Activated B cell treated with CpG ODN at 0.5 μM for 24 hours (primary cell): ENCODE measurements at regions of chr6 and their contacts with region 1.

Region 1: GRCh38 chr6:43059168-43060033 is at the starts of genes KLC4 and MRPL2:
- DNase-seq: peak; percentile 94
- ATAC-seq: peak; percentile 97
- H3K4me3 Mint-ChIP-seq: peak within 1 kb of the TSS; percentile 95
- H3K27ac Mint-ChIP-seq: peak within 1 kb of the TSS; percentile 97
- H3K4me1 Mint-ChIP-seq: peaks cover 38% of the 10 kb centered on the region
- H3K27me3 Mint-ChIP-seq: no peaks in the 10 kb centered on the region
- CTCF ChIP-seq: no peak
- total RNA-seq, gene KLC4: 17.0 and 19.8 TPM in 2 replicates
- total RNA-seq, gene MRPL2: 43.9 and 47.8 TPM in 2 replicates

Region 2: GRCh38 chr6:42984001-42984923 is 75.1 kb before region 1 on chr6 and contains the start of gene PPP2R5D:
- CTCF ChIA-PET with region 1: no interaction called
- POLR2A ChIA-PET with region 1: interaction called, 13 read pairs
- intact Hi-C with region 1: loop called (anchors 2 kb)
- DNase-seq: peak; percentile 88
- ATAC-seq: peak; percentile 95
- H3K4me3 Mint-ChIP-seq: peak within 1 kb of the TSS; percentile 85
- H3K27ac Mint-ChIP-seq: peak within 1 kb of the TSS; percentile 88
- H3K4me1 Mint-ChIP-seq: peaks cover 44% of the 10 kb centered on the region
- H3K27me3 Mint-ChIP-seq: no peaks in the 10 kb centered on the region
- CTCF ChIP-seq: no peak
- total RNA-seq, gene PPP2R5D: 26.7 and 26.8 TPM in 2 replicates

Region 3: DNA sequence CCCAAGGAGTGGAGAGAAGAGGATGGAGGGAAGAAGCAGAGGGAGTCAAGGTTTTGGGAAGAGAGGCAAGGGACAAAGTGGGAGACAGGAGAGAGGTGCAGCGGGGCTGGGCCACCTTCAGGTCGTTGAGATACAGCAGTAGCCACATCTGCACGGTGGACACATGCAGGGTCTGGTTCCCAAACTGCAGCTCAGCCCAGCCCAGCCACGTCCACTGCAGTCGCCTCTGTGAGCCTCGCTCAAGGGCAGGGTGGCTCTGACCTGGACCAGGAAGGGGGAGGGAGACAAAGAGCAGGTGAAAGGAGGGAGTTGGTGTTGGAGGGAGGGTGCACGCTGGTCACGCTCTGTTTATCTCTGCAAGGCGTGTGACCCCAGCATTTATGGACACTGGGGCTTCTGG is 20.7 kb before region 1 on chr6:
- CTCF ChIA-PET with region 1: no interaction called
- POLR2A ChIA-PET with region 1: no interaction called
- intact Hi-C with region 1: no loop called
- DNase-seq: no peak
- ATAC-seq: no peak
- H3K4me3 Mint-ChIP-seq: no peak overlapping the region
- H3K27ac Mint-ChIP-seq: no peak overlapping the region
- H3K4me1 Mint-ChIP-seq: no peaks in the 10 kb centered on the region
- H3K27me3 Mint-ChIP-seq: no peaks in the 10 kb centered on the region
- CTCF ChIP-seq: no peak

Region 4: GRCh38 chr6:43086022-43086658 is 26.7 kb after region 1 on chr6:
- CTCF ChIA-PET with region 1: no interaction called
- POLR2A ChIA-PET with region 1: no interaction called
- intact Hi-C with region 1: loop called (anchors 1 kb)
- DNase-seq: no peak
- ATAC-seq: peak; percentile 95
- H3K4me3 Mint-ChIP-seq: no peak overlapping the region
- H3K27ac Mint-ChIP-seq: no peak overlapping the region
- H3K4me1 Mint-ChIP-seq: peaks cover 6% of the 10 kb centered on the region
- H3K27me3 Mint-ChIP-seq: peaks cover 5% of the 10 kb centered on the region
- CTCF ChIP-seq: no peak

Region 5: DNA sequence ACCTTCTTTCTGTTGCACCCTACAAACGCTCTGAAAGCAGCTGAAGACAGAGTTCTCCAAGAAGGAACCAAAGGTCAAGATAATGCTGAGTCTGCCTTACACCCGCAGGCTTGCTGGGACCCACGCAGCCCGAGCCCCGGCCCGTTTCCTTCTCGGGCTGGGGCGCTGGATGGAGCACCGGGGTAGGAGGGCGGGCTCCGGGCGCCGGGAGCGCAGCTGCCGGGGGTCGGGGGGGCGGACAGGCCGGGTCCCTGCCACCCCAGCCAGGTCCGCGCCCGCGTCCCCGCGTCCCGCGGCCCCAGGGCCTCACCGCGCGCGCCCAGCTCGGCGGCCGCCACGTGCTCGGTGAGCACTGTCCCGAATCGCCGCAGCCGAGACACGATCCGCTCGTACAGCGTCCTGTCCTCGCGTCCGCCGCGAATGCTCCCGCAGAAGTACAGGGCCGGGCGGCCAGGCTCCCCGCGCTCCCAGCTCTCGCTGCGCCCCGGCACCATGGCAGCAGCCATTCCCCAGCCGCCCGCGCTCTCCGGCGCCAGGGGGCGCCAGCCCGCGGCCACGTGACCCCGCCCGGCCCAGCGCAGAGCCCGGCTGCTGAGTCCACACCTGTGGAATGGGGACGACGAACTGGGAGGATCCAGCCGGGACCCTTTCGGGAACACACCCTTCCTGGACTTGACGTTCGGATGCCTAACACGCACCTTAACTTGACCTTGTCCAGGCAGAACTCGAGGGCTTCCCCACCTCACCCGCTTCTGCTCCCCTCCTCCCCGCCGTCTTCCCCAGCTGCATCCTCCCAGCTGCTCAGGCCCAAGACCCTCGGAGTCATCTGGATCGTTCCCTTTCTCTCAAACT is 169.8 kb after region 1 on chr6 and contains the start of gene DNPH1:
- CTCF ChIA-PET with region 1: no interaction called
- POLR2A ChIA-PET with region 1: interaction called, 4 read pairs
- intact Hi-C with region 1: loop called (anchors 10 kb)
- DNase-seq: peak; percentile 87
- ATAC-seq: peak; percentile 69
- H3K4me3 Mint-ChIP-seq: peak within 1 kb of the TSS; percentile 87
- H3K27ac Mint-ChIP-seq: peak within 1 kb of the TSS; percentile 75
- H3K4me1 Mint-ChIP-seq: peaks cover 39% of the 10 kb centered on the region
- H3K27me3 Mint-ChIP-seq: no peaks in the 10 kb centered on the region
- CTCF ChIP-seq: peak; percentile 57
- total RNA-seq, gene DNPH1: 56.7 and 57.5 TPM in 2 replicates

Region 6: GRCh38 chr6:43575772-43576551 is 516.6 kb after region 1 on chr6 and contains the starts of genes POLH and XPO5:
- CTCF ChIA-PET with region 1: no interaction called
- POLR2A ChIA-PET with region 1: no interaction called
- intact Hi-C with region 1: loop called (anchors 2 kb)
- DNase-seq: peak; percentile 91
- ATAC-seq: peak; percentile 94
- H3K4me3 Mint-ChIP-seq: peak within 1 kb of the TSS; percentile 97
- H3K27ac Mint-ChIP-seq: peak within 1 kb of the TSS; percentile 86
- H3K4me1 Mint-ChIP-seq: peaks cover 38% of the 10 kb centered on the region
- H3K27me3 Mint-ChIP-seq: no peaks in the 10 kb centered on the region
- CTCF ChIP-seq: no peak
- total RNA-seq, gene POLH: 23.3 and 26.5 TPM in 2 replicates
- total RNA-seq, gene XPO5: 54.4 and 59.4 TPM in 2 replicates

Region 7: DNA sequence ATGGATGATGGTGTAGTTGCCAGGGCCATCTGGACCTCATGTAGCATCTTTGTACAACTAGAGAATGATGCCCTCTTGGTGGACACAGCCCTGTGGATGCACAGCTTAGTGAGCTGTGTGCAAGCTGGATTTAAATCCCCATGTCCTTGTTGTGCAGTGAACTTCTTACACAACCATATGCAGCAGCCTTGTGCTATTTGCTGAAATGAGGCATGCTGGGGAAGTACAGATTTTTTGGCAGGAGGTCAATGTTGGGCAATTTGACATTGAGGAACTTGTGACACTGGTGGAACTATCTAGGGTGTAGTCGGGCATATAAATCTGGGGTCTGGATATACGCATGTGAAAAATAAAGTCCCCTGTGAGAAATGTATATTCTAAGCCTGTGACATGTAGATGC is 1322.3 kb after region 1 on chr6:
- CTCF ChIA-PET with region 1: no interaction called
- POLR2A ChIA-PET with region 1: no interaction called
- intact Hi-C with region 1: no loop called
- DNase-seq: no peak
- ATAC-seq: no peak
- H3K4me3 Mint-ChIP-seq: no peak overlapping the region
- H3K27ac Mint-ChIP-seq: no peak overlapping the region
- H3K4me1 Mint-ChIP-seq: peaks cover 4% of the 10 kb centered on the region
- H3K27me3 Mint-ChIP-seq: no peaks in the 10 kb centered on the region
- CTCF ChIP-seq: no peak